ENCODE measurements at regions of chr13 and their contacts with region 1.

Region 1: GRCh38 chr13:46492946-46493345 is 60.0 kb upstream of the LRCH1 start:
- DNase-seq: peak; percentile 65
- H3K4me3 ChIP-seq: no peak overlapping the region
- H3K27ac ChIP-seq: no peak overlapping the region
- H3K4me1 ChIP-seq: peaks cover 21% of the 10 kb centered on the region
- H3K27me3 ChIP-seq: no peaks in the 10 kb centered on the region

Region 2: DNA sequence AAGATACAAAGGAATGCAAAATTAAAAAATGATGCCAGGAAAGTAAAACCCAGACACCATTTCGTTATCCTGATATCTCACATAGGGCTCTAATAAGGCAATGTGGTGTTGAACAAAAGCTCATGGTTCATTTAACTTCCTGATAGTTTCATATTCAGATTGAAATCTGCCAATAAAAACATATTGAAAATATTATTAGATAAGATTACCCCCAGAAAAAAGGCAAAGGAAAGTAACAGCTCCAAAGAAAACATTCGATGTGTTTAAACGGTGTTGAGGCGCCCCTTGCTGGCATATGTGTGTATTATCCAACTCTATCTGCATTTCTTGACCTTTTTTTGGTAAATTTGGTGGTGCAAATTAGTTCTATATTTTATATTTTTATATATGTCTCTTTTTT is 228.1 kb after region 1 on chr13:
- in situ Hi-C with region 1: loop called (anchors 10 kb)
- DNase-seq: peak; percentile 76
- H3K4me3 ChIP-seq: no peak overlapping the region
- H3K27ac ChIP-seq: no peak overlapping the region
- H3K4me1 ChIP-seq: no peaks in the 10 kb centered on the region
- H3K27me3 ChIP-seq: no peaks in the 10 kb centered on the region